CD8-positive, alpha-beta memory T cell (primary cell): ENCODE measurements at regions of chr17 and their contacts with region 1.

Region 1: GRCh38 chr17:8073627-8074484 is 13.7 kb downstream of the ALOX12B start:
- DNase-seq: peak; percentile 70 to 85 (median 80)
- H3K4me3 ChIP-seq: peak overlapping the region; percentile 51
- H3K4me3 Mint-ChIP-seq: peak overlapping the region; percentile 16 to 86 (median 81)
- H3K27ac ChIP-seq: no peak overlapping the region
- H3K27ac Mint-ChIP-seq: peak overlapping the region in 5 of 8 donors; percentile 47 to 91 (median 78)
- H3K4me1 ChIP-seq: peaks cover 25% of the 10 kb centered on the region
- H3K4me1 Mint-ChIP-seq: peaks cover 16 to 25% (median 19%) of the 10 kb centered on the region in 3 donors
- H3K27me3 ChIP-seq: peaks cover 17% of the 10 kb centered on the region
- H3K27me3 Mint-ChIP-seq: peaks cover 36 to 47% of the 10 kb centered on the region in 2 donors

Region 2: DNA sequence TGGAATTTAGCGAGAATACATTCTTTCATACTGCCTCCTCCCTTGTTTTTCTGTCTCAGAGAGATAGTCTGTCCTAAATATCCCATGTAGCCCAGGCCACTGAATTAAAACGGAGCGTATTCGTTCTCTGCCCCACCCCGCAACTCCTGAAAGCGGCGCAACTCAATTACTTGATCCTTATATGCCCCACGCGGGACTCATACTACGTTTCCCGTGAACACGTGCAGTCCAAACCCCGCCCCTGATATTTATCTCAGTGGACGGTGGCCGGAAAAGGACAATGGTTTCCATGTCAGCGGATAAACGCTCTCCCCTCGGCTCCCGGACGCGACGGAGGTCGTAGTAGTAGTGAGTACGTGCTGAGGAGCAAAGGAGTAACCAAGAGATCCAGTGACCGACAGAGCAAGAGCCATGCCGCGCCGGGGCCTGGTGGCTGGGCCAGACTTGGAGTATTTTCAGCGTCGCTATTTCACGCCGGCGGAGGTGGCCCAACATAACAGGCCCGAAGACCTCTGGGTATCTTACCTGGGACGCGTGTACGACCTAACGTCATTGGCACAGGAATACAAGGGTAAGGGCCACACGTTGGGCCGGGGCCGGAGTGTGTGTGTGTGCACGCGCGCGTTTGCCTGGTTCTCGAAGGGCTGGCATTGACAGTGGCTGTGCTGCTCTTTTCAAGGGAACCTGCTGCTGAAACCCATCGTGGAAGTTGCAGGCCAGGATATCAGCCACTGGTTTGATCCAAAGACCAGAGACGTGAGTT is 216.0 kb before region 1 on chr17 and contains the start of gene CYB5D1:
- CTCF ChIA-PET with region 1: no interaction called
- POLR2A ChIA-PET with region 1: no interaction called
- DNase-seq: peak; percentile 76 to 95 (median 93)
- H3K4me3 ChIP-seq: peak within 1 kb of the TSS; percentile 79
- H3K4me3 Mint-ChIP-seq: peak within 1 kb of the TSS in 1 of 7 donors; percentile 49
- H3K27ac ChIP-seq: peak within 1 kb of the TSS; percentile 81
- H3K27ac Mint-ChIP-seq: peak within 1 kb of the TSS in 2 of 8 donors; percentile 54 to 76
- H3K4me1 ChIP-seq: peaks cover 21% of the 10 kb centered on the region
- H3K4me1 Mint-ChIP-seq: peaks cover 4 to 7% (median 7%) of the 10 kb centered on the region in 3 donors
- H3K27me3 ChIP-seq: no peaks in the 10 kb centered on the region
- H3K27me3 Mint-ChIP-seq: no peaks in the 10 kb centered on the region
- total RNA-seq, gene CYB5D1: 16.4 to 17.6 TPM

Region 3: GRCh38 chr17:8109661-8110464 is 36.0 kb after region 1 on chr17:
- CTCF ChIA-PET with region 1: interaction called, 25 read pairs
- POLR2A ChIA-PET with region 1: interaction called, 6 read pairs
- DNase-seq: peak; percentile 74 to 86 (median 76)
- H3K4me3 ChIP-seq: peak overlapping the region; percentile 65
- H3K4me3 Mint-ChIP-seq: peak overlapping the region in 5 of 7 donors; percentile 66 to 72 (median 69)
- H3K27ac ChIP-seq: no peak overlapping the region
- H3K27ac Mint-ChIP-seq: peak overlapping the region in 1 of 8 donors; percentile 23
- H3K4me1 ChIP-seq: no peaks in the 10 kb centered on the region
- H3K4me1 Mint-ChIP-seq: peaks cover 0 to 5% (median 2%) of the 10 kb centered on the region in 3 donors
- H3K27me3 ChIP-seq: peaks cover 27% of the 10 kb centered on the region
- H3K27me3 Mint-ChIP-seq: peaks cover 27 to 34% of the 10 kb centered on the region in 2 donors

Region 4: GRCh38 chr17:8126531-8127066 is 52.7 kb after region 1 on chr17:
- CTCF ChIA-PET with region 1: no interaction called
- POLR2A ChIA-PET with region 1: no interaction called
- DNase-seq: peak; percentile 30 to 55 (median 46)
- H3K4me3 ChIP-seq: peak overlapping the region; percentile 65
- H3K4me3 Mint-ChIP-seq: peak overlapping the region; percentile 85 to 94 (median 92)
- H3K27ac ChIP-seq: no peak overlapping the region
- H3K27ac Mint-ChIP-seq: peak overlapping the region; percentile 5 to 85 (median 77)
- H3K4me1 ChIP-seq: peaks cover 40% of the 10 kb centered on the region
- H3K4me1 Mint-ChIP-seq: peaks cover 43 to 54% (median 51%) of the 10 kb centered on the region in 3 donors
- H3K27me3 ChIP-seq: peaks cover 7% of the 10 kb centered on the region
- H3K27me3 Mint-ChIP-seq: peaks cover 17 to 31% of the 10 kb centered on the region in 2 donors

Region 5: DNA sequence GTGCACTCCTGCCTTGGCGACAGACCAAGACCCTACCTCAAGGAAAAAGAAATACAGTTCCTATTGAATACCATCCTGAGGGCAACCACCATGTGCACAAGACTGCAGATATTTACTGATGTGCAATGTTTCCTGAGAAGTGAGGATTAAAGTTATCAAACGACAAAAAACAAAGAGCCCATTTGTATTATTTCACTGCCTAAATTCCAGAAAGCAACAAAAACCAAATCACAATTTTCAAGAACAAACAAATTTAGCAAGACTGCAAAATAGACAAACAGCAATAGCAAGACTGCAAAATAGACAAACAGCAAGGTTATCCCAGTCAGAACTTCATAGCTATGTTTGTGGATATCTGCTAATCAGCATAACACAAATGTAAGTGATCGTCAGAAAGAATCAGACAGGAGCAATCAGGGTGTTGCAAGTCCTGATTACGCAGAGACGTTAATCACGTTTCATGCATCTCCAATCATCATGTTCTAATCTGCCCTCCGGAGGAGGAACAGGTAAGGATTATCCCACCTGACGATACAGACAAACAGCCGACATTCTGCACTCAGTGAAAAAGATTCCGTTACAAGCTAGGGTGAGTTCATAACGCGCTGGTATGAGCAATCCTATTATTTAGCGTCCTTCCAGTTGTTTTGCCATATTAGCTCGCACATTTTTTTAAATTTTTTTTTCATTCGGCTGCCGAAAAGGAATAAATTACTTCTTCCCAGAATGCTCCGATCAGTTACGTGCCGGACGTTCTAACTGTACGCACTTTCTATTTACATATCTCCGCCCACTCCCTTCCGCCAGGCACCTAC is 99.4 kb after region 1 on chr17:
- CTCF ChIA-PET with region 1: no interaction called
- POLR2A ChIA-PET with region 1: no interaction called
- DNase-seq: peak; percentile 60 to 92 (median 89)
- H3K4me3 ChIP-seq: peak overlapping the region; percentile 57
- H3K4me3 Mint-ChIP-seq: peak overlapping the region; percentile 86 to 95 (median 90)
- H3K27ac ChIP-seq: peak overlapping the region; percentile 98
- H3K27ac Mint-ChIP-seq: peak overlapping the region; percentile 99 to 100 (median 100)
- H3K4me1 ChIP-seq: peaks cover 44% of the 10 kb centered on the region
- H3K4me1 Mint-ChIP-seq: peaks cover 37 to 55% (median 51%) of the 10 kb centered on the region in 3 donors
- H3K27me3 ChIP-seq: no peaks in the 10 kb centered on the region
- H3K27me3 Mint-ChIP-seq: peaks cover 0 to 5% of the 10 kb centered on the region in 2 donors

Region 6: GRCh38 chr17:8294814-8295316 is 221.0 kb after region 1 on chr17:
- CTCF ChIA-PET with region 1: interaction called, 12 read pairs
- POLR2A ChIA-PET with region 1: interaction called, 4 read pairs
- DNase-seq: no peak
- H3K4me3 ChIP-seq: peak overlapping the region; percentile 87
- H3K4me3 Mint-ChIP-seq: peak overlapping the region; percentile 89 to 96 (median 92)
- H3K27ac ChIP-seq: peak overlapping the region; percentile 81
- H3K27ac Mint-ChIP-seq: peak overlapping the region; percentile 86 to 99 (median 95)
- H3K4me1 ChIP-seq: peaks cover 17% of the 10 kb centered on the region
- H3K4me1 Mint-ChIP-seq: peaks cover 31 to 44% (median 31%) of the 10 kb centered on the region in 3 donors
- H3K27me3 ChIP-seq: no peaks in the 10 kb centered on the region
- H3K27me3 Mint-ChIP-seq: peaks cover 0 to 5% of the 10 kb centered on the region in 2 donors